ENCODE measurements at regions of chr3 and their contacts with region 1.

Region 1: DNA sequence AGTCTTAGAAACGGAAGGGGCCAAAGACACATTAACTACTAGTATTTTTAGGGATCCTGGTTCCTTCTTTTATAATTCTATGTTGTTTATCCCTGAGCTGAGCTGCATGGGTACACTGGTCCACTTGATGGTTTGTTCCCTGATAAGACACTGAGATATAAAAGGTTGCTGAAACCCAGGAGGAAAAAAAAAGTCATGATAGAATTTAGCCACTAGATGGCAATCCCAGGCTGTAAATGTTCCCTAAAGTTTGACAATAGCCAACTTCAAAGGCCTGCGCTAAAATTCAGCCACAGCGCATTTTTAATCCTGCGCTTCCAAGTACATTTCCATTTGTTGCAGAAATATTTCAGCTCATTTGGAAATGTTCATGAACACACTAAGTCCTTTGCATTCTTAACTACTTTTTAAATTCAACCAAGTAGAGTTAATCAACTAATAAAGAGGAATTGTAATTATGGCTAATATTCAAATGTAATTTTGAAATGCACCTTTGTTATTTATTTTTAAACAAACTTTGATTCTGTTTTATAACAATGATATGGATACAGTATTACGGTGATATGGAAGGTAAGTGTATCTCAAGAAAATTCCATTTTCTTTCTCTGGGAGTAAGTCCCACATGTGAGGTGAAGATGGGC is 249.3 kb upstream of the FEZF2 start:
- DNase-seq: no peak
- H3K4me3 ChIP-seq: no peak overlapping the region
- H3K27ac ChIP-seq: no peak overlapping the region
- H3K4me1 ChIP-seq: no peaks in the 10 kb centered on the region
- H3K27me3 ChIP-seq: peaks cover 4% of the 10 kb centered on the region; the same call in 1 of the 2 replicates
- CTCF ChIP-seq: peak; percentile 64

Region 2: DNA sequence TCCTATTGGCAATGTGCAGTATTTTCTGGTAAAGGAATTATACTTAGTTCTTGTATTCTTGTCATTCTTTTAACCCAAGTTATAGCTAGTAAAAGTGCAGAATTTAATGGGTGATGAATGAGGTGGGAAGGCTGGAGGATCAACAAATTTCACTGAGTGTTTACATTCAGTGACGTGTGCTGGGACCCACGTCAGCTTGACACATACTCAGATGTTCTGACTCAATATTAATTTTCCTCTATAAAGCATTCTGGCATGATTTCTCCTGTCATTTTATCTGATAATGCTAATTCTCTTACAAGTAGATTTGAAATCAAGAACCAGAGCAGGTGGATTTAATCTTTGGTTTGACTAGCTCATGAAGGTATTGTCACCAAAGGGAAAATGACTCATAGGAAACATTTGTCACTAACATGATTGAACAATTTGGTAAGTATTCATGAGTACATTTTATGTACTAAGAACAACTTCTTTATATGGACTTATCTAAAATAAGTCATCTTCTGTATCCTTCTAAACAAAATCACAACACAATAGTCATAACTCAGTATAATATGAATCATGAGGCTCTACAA is 584.5 kb after region 1 on chr3:
- CTCF ChIA-PET with region 1: no interaction called
- POLR2A ChIA-PET with region 1: no interaction called
- intact Hi-C with region 1: no loop called
- DNase-seq: no peak
- H3K4me3 ChIP-seq: no peak overlapping the region
- H3K27ac ChIP-seq: no peak overlapping the region
- H3K4me1 ChIP-seq: no peaks in the 10 kb centered on the region
- H3K27me3 ChIP-seq: no peaks in the 10 kb centered on the region
- CTCF ChIP-seq: no peak

Region 3: GRCh38 chr3:63333842-63334241 is 711.2 kb after region 1 on chr3:
- CTCF ChIA-PET with region 1: no interaction called
- POLR2A ChIA-PET with region 1: no interaction called
- intact Hi-C with region 1: loop called (anchors 10 kb)
- DNase-seq: no peak
- H3K4me3 ChIP-seq: no peak overlapping the region
- H3K27ac ChIP-seq: no peak overlapping the region
- H3K4me1 ChIP-seq: no peaks in the 10 kb centered on the region
- H3K27me3 ChIP-seq: no peaks in the 10 kb centered on the region
- CTCF ChIP-seq: peak; percentile 45; the same call in 1 of the 2 replicates

Measured in PC-9 (cell line).